ENCODE measurements at regions of chr3 and their contacts with region 1.

Region 1: DNA sequence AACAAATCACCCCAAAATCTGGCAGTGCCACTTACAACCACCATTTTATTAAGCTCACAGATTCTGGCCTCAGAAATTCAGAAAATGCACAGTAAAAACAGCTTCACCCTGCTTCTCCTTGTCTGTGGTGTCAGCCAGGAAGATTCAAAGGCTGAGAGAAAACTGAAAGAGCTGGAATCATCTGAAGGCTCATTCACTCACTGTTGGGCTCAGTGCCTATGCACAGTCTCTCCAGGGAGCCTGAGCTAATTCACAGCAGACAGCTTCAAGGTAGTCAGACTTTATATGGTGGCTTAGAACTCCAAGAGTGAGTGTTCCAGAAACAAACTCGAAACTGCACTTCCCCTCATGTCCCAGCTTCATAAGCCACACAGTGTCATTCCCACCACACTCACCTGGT is 16.5 kb upstream of the PLOD2 start:
- DNase-seq: no peak
- ATAC-seq: no peak
- H3K4me3 ChIP-seq: no peak overlapping the region
- H3K27ac ChIP-seq: no peak overlapping the region
- H3K4me1 ChIP-seq: no peaks in the 10 kb centered on the region
- H3K27me3 ChIP-seq: no peaks in the 10 kb centered on the region
- CTCF ChIP-seq: no peak

Region 2: DNA sequence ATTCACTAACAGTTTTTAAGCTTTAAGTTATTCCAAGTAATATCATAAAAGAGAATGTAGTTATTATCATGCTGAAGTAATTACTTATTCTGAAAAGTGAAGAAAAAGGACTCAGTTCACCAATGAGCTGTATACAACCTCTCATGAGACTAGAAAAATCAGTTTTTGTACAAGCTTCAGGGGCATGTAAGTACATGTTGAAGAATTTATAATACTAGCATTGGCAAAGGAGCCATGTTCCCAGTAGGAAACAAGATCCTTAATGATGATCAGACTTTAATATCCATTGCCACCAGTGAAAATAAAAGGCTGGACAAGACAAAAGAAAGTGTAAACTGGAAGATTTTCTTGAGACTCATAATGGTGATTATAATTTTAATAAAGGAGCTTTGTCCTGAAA is 549.3 kb before region 1 on chr3:
- intact Hi-C with region 1: no loop called
- DNase-seq: no peak
- ATAC-seq: no peak
- H3K4me3 ChIP-seq: no peak overlapping the region
- H3K27ac ChIP-seq: no peak overlapping the region
- H3K4me1 ChIP-seq: no peaks in the 10 kb centered on the region
- H3K27me3 ChIP-seq: no peaks in the 10 kb centered on the region
- CTCF ChIP-seq: no peak

Region 3: DNA sequence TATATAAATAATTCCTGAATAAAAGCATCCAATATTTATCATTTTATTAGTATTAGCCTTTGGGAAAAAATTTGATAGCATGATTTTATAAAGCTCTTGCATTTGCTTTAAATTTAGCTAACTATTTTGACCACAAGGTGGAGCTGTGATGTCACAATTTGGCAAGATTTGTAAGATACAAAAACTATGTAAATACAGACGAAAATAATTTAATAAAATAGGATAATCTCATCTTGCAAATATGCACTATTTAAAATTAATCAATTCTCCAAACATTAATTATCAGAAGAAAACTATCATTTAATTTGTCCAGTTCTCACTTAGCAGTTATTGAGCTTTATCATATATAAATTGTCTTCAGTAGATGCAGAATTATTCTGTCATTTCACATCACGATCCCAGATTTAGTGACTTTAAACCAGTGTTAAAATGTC is 111.9 kb before region 1 on chr3:
- intact Hi-C with region 1: loop called in 2 of 3 experiments (anchors 10 kb)
- DNase-seq: peak in 2 of 6 donors; percentile 6 to 18
- ATAC-seq: peak; percentile 38 to 58 (median 46)
- H3K4me3 ChIP-seq: no peak overlapping the region
- H3K27ac ChIP-seq: no peak overlapping the region
- H3K4me1 ChIP-seq: peaks cover 0 to 5% (median 0%) of the 10 kb centered on the region in 3 donors
- H3K27me3 ChIP-seq: no peaks in the 10 kb centered on the region
- CTCF ChIP-seq: peak; percentile 22 to 80 (median 72)

Region 4: DNA sequence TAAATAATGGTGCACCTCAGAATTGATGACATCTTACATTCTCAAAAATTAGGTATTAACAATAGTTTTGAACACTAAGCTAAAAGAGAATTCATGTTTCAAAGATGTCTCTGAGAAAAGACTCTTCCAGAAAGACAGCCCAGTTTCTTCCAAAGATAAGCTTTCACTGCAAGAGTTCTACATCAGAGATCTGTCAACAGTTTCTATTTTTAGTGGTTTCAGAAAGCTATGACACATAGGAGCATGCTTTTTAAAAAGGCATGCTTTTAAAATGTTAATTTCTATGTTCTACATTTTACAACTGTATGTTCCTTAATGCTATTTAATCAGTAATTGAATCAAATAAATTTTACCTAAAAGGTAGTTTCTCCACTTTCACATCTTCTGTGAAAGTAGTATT is 104.7 kb before region 1 on chr3:
- intact Hi-C with region 1: loop called in 2 of 3 experiments (anchors 10 kb)
- DNase-seq: no peak
- ATAC-seq: no peak
- H3K4me3 ChIP-seq: no peak overlapping the region
- H3K27ac ChIP-seq: no peak overlapping the region
- H3K4me1 ChIP-seq: no peaks in the 10 kb centered on the region
- H3K27me3 ChIP-seq: no peaks in the 10 kb centered on the region
- CTCF ChIP-seq: no peak

Measured in pancreas (tissue), 10 donors.